Motor neuron (in vitro differentiated cells): ENCODE measurements at regions of chr11 and their contacts with region 1.

Region 1: DNA sequence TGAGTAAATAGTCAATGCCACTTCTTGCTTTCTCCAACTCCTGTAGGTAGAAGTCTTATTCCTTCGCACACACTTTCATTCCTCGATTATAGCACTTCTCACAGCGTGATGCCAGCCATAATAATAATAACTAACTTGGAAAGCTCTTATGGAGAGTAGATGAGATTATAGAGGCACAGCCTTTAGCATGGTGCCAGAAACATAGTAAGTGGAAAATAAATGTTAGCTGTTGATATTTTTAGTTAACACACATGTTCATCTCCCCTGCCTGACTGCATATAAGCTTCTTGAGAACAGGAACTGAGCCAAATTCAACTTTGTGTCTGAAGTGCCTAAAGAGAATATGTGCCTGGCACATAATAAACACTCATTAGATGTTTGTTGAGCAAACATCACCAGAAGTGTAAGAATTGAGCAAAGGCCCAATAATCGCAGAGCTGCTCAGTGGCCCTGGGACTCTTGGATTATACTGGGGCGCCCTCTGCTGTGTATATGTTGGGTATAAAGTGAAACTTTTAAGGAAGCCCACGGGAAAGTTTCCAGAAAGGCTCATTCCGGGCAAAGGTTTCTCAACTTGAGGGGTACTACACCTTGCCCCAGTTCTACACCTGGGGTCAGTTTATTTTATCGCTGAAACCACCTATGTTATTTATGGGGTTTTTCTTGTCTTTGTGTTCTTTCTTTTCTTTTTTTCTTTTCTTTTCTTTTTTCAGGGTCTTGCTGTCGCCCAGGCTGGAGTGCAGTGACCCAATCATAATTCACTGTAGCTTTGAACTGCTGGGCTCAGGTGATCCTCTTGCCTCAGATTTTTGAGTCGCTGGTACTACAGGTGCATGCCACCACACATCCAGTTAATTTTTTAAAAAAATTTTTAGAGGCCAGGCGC is 22.3 kb downstream of the SLN start:
- ATAC-seq: peak; percentile 54 to 98 (median 81)
- H3K4me3 ChIP-seq: no peak overlapping the region
- H3K27ac ChIP-seq: no peak overlapping the region
- H3K4me1 ChIP-seq: no peaks in the 10 kb centered on the region

Region 2: GRCh38 chr11:107565219-107565937 is 124.2 kb before region 1 on chr11 and contains the start of gene ALKBH8:
- in situ Hi-C with region 1: loop called in 6 of 9 experiments (anchors 5 to 10 kb)
- ATAC-seq: peak; percentile 89 to 95 (median 94)
- H3K4me3 ChIP-seq: peak within 1 kb of the TSS; percentile 83 to 98 (median 95)
- H3K27ac ChIP-seq: peak within 1 kb of the TSS; percentile 73 to 79
- H3K4me1 ChIP-seq: peaks cover 14 to 21% of the 10 kb centered on the region in 2 donors
- total RNA-seq, gene ALKBH8: 7.2 to 12.1 (median 9.4) TPM

Region 3: DNA sequence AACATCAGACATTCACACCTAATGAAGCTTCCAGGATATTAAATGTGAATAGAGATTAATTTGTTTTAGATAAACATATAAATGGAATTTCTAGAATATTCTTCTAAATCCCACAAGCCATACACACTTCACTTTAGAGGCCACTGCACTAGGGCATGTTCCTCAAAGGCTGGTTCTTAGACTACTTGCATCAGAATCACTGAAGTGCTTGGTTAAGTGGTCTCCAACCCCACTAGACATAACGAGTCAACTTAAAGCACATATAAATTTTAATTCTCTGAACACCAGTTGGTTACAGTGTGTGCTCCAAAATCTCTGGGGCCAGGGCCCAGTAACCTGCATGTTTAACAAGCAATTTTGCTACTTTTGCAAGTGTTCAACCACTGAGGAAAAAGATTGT is 116.1 kb before region 1 on chr11:
- in situ Hi-C with region 1: loop called (anchors 5 to 25 kb)
- ATAC-seq: no peak
- H3K4me3 ChIP-seq: no peak overlapping the region
- H3K27ac ChIP-seq: no peak overlapping the region
- H3K4me1 ChIP-seq: no peaks in the 10 kb centered on the region

Region 4: GRCh38 chr11:107590460-107591377 is 98.8 kb before region 1 on chr11 and contains the start of gene ELMOD1:
- in situ Hi-C with region 1: loop called in 3 of 9 experiments (anchors 25 kb)
- ATAC-seq: peak; percentile 78 to 92 (median 90)
- H3K4me3 ChIP-seq: peak within 1 kb of the TSS; percentile 61 to 97 (median 81)
- H3K27ac ChIP-seq: peak within 1 kb of the TSS; percentile 15 to 66
- H3K4me1 ChIP-seq: peaks cover 8 to 15% of the 10 kb centered on the region in 2 donors
- total RNA-seq, gene ELMOD1: 4.9 to 75.7 (median 34.9) TPM

Region 5: DNA sequence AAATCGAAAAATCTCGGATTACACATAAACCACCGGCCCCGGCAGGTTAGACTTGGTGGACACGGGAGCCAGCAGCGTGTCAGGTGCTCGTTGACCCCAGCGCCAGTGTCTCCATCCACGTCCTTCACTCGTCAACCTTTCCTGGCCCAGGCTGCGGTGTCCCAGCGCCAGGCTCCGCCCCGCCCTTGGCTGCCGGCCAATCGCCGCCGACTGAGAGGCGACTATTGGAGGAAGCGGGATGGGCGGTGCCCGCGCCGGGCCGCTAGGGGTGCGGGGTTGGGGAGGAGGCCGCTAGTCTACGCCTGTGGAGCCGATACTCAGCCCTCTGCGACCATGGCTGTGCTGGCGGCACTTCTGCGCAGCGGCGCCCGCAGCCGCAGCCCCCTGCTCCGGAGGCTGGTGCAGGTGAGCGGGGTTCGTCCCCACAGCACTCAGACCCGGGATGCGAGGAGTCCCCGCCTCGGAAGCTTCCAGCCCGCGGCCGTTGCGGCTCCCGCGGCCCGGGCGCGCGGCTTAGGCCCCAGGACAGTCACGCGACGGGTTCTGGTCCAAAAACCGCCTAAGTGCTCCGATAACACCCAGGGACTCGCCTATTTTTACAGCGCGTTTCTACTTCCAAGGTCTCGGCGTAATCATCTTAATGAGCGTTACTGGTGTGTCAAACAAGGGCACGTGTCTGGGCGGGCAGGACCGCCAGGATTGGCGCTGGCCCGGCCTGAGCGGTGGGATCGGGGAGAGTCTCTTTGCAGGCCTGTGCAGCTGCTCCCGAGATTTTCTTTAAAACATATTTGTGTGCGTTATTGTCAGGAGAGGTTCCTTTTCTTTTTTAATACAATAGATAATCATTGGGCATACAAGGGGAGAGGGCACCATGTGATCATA is 432.0 kb after region 1 on chr11 and contains the start of gene ACAT1:
- in situ Hi-C with region 1: no loop called
- ATAC-seq: peak; percentile 90 to 98 (median 97)
- H3K4me3 ChIP-seq: peak within 1 kb of the TSS; percentile 56 to 67 (median 61)
- H3K27ac ChIP-seq: peak within 1 kb of the TSS; percentile 77 to 91
- H3K4me1 ChIP-seq: peaks cover 8 to 11% of the 10 kb centered on the region in 2 donors
- total RNA-seq, gene ACAT1: 35.0 to 107 (median 51.3) TPM